Activated naive CD4-positive, alpha-beta T cell treated with anti-CD3 and anti-CD28 coated beads for 36 hours (primary cell): ENCODE measurements at regions of chrX and their contacts with region 1.

Region 1: DNA sequence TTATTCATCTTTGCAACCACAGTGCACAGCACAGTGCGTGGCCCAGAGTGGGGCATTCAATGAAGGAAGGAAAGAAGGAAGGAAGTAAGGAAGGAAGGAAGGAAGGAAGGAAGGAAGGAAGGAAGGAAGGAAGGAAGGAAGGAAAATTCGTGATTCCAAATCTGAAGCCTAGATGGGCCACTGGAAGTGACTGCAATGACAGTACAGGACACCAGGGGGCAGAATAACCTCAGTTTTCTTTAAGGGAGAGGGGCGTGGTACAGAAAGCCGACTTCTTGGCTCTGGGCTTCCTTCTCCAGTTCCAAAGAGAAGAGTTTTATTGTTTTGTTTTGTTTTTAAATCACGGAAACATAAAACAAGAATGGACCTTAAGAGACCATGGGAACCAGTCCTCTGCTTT is 47.8 kb downstream of the APLN start:
- DNase-seq: peak; percentile 68
- H3K4me3 Mint-ChIP-seq: no peak overlapping the region
- H3K27ac Mint-ChIP-seq: no peak overlapping the region
- H3K4me1 Mint-ChIP-seq: peaks cover 14% of the 10 kb centered on the region
- H3K27me3 Mint-ChIP-seq: no peaks in the 10 kb centered on the region

Region 2: DNA sequence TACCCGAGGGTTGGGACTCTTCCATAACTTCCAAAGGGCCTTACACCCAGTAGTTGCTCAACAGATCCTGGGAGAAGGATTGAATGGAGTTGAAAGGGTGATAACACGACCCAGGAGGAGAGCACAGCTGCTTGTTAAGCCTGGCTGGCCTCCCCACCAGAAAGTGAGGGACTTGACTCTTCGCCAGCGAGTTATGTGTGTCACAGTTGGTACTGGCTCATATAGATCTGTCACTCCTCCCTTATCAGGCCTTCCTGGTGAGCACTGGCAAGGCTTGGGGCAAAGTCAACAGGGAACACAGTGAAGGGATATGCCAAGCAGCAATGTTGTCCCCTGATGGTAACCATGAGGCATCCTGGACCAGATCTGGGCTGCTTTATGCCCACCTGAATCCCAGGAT is 12.1 kb after region 1 on chrX:
- CTCF ChIA-PET with region 1: no interaction called
- intact Hi-C with region 1: no loop called
- DNase-seq: no peak
- H3K4me3 Mint-ChIP-seq: no peak overlapping the region
- H3K27ac Mint-ChIP-seq: no peak overlapping the region
- H3K4me1 Mint-ChIP-seq: no peaks in the 10 kb centered on the region
- H3K27me3 Mint-ChIP-seq: no peaks in the 10 kb centered on the region

Region 3: DNA sequence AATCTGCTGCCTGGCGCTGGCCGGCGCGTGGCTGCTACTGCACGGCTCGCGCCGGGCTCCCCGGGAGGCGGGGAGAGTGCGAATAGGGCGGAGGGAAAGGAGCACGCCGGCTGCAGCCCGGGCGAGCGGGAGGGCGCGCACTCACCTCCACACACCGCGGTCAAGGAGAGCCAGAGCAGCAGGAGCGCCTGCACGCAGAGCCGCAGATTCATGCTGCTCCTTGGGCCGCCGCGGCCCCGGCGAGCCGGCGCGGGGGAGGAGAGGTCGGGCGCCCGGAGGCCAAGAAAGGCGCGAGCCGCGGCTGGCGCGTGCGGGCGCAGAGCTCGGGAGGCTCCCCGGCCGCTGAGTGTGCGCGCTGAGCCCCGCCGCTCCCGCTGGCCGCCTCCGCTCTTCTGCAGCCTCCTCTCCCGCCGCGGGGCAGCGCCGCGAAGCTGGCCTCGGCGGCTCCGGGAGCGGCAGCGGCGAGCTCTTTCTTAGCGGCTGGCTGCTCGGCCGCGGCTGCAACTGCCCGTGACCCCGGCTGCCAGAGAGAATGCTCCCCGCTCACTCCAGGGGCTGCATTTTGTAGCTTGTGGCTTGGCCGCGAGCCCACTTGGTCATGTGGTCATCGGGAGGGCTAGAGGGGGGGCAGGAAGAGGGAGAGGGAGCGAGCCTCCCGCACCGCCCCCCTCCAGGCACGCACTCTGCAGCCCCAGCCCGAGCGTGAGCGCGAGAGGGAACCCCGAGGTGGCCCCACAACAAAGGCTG is 47.7 kb after region 1 on chrX and contains the start of gene APLN:
- CTCF ChIA-PET with region 1: no interaction called
- intact Hi-C with region 1: loop called (anchors 5 kb)
- DNase-seq: no peak
- H3K4me3 Mint-ChIP-seq: peak within 1 kb of the TSS; percentile 61
- H3K27ac Mint-ChIP-seq: no peak within 1 kb of the TSS
- H3K4me1 Mint-ChIP-seq: peaks cover 6% of the 10 kb centered on the region
- H3K27me3 Mint-ChIP-seq: peaks cover 11% of the 10 kb centered on the region
- total RNA-seq, gene APLN: 0.15 to 0.36 TPM

Region 4: GRCh38 chrX:129754056-129755024 is 147.4 kb after region 1 on chrX:
- CTCF ChIA-PET with region 1: no interaction called
- intact Hi-C with region 1: loop called (anchors 1 kb)
- DNase-seq: peak; percentile 49
- H3K4me3 Mint-ChIP-seq: peak overlapping the region; percentile 15
- H3K27ac Mint-ChIP-seq: peak overlapping the region; percentile 8
- H3K4me1 Mint-ChIP-seq: peaks cover 45% of the 10 kb centered on the region
- H3K27me3 Mint-ChIP-seq: no peaks in the 10 kb centered on the region

Region 5: DNA sequence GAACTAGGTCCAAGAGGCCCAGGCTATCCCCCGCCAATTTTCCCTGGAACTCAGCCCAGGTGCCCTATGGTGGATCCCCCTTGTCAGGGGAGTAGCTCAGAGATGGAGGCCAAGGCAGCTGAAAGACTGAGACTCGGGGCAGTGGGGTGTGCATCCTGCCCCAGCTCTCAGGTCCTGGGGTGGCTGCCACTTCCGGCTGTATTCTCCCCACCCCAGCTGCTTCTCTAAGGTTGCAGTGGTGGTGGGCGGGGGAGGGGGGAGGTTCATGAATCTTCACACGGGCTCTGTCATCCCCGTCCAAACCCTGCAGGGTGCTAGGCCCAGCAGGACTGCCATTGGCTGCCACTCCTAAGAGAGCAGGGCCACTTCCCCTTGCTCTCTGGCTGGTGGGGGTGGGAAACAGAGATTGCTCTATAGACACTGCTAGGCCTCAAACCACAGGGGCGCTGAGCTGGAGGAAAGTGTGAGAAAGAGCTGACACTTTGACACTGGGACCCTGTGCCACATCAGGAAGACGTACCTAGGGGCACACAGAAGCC is 174.3 kb after region 1 on chrX:
- CTCF ChIA-PET with region 1: no interaction called
- intact Hi-C with region 1: no loop called
- DNase-seq: peak; percentile 91
- H3K4me3 Mint-ChIP-seq: peak overlapping the region; percentile 82
- H3K27ac Mint-ChIP-seq: peak overlapping the region; percentile 97
- H3K4me1 Mint-ChIP-seq: peaks cover 53% of the 10 kb centered on the region
- H3K27me3 Mint-ChIP-seq: no peaks in the 10 kb centered on the region

Region 6: GRCh38 chrX:129905787-129906580 is 299.1 kb after region 1 on chrX and contains the start of gene UTP14A:
- CTCF ChIA-PET with region 1: no interaction called
- intact Hi-C with region 1: loop called (anchors 2 kb)
- DNase-seq: peak; percentile 92
- H3K4me3 Mint-ChIP-seq: peak within 1 kb of the TSS; percentile 84
- H3K27ac Mint-ChIP-seq: peak within 1 kb of the TSS; percentile 82
- H3K4me1 Mint-ChIP-seq: peaks cover 31% of the 10 kb centered on the region
- H3K27me3 Mint-ChIP-seq: no peaks in the 10 kb centered on the region
- total RNA-seq, gene UTP14A: 21.5 to 22.6 TPM

Region 7: GRCh38 chrX:129976441-129976840 is 369.5 kb after region 1 on chrX:
- CTCF ChIA-PET with region 1: no interaction called
- intact Hi-C with region 1: no loop called
- DNase-seq: no peak
- H3K4me3 Mint-ChIP-seq: no peak overlapping the region
- H3K27ac Mint-ChIP-seq: no peak overlapping the region
- H3K4me1 Mint-ChIP-seq: peaks cover 3% of the 10 kb centered on the region
- H3K27me3 Mint-ChIP-seq: no peaks in the 10 kb centered on the region

Region 8: GRCh38 chrX:130024127-130024526 is 417.2 kb after region 1 on chrX:
- CTCF ChIA-PET with region 1: interaction called, 5 read pairs
- intact Hi-C with region 1: loop called (anchors 2 kb)
- DNase-seq: peak; percentile 92
- H3K4me3 Mint-ChIP-seq: peak overlapping the region; percentile 48
- H3K27ac Mint-ChIP-seq: peak overlapping the region; percentile 77
- H3K4me1 Mint-ChIP-seq: peaks cover 12% of the 10 kb centered on the region
- H3K27me3 Mint-ChIP-seq: no peaks in the 10 kb centered on the region

Region 9: GRCh38 chrX:130196466-130196865 is 589.5 kb after region 1 on chrX:
- CTCF ChIA-PET with region 1: no interaction called
- intact Hi-C with region 1: loop called (anchors 1 kb)
- DNase-seq: no peak
- H3K4me3 Mint-ChIP-seq: no peak overlapping the region
- H3K27ac Mint-ChIP-seq: no peak overlapping the region
- H3K4me1 Mint-ChIP-seq: no peaks in the 10 kb centered on the region
- H3K27me3 Mint-ChIP-seq: no peaks in the 10 kb centered on the region